ENCODE measurements at regions of chr9 and their contacts with region 1.

Region 1: DNA sequence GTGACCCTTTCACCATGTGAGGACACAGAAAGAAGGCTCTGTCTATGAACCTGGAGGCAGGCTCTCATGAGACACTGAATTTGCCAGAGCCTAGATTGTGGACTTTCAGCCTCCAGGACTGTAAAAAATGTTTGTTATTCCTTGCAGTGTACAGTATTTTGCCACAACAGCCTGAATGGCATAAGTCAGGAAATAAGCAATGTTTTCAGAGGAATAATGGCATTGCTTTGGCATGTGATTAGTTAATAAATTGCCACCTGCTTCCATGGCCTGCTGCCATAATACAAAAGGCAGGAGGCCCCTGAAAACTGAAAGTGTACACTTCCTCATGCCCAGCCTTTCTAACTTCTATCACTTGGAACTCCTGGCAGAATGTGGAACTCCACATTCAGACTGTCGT is 408.1 kb downstream of the GADD45G start:
- DNase-seq: peak in 1 of 3 donors; percentile 24
- H3K4me3 ChIP-seq: no peak overlapping the region
- H3K4me3 Mint-ChIP-seq: no peak overlapping the region
- H3K27ac ChIP-seq: no peak overlapping the region
- H3K27ac Mint-ChIP-seq: no peak overlapping the region
- H3K4me1 ChIP-seq: peaks cover 20 to 24% of the 10 kb centered on the region in 2 donors
- H3K4me1 Mint-ChIP-seq: peaks cover 25% of the 10 kb centered on the region
- H3K27me3 ChIP-seq: no peaks in the 10 kb centered on the region
- H3K27me3 Mint-ChIP-seq: no peaks in the 10 kb centered on the region
- CTCF ChIP-seq: no peak

Region 2: DNA sequence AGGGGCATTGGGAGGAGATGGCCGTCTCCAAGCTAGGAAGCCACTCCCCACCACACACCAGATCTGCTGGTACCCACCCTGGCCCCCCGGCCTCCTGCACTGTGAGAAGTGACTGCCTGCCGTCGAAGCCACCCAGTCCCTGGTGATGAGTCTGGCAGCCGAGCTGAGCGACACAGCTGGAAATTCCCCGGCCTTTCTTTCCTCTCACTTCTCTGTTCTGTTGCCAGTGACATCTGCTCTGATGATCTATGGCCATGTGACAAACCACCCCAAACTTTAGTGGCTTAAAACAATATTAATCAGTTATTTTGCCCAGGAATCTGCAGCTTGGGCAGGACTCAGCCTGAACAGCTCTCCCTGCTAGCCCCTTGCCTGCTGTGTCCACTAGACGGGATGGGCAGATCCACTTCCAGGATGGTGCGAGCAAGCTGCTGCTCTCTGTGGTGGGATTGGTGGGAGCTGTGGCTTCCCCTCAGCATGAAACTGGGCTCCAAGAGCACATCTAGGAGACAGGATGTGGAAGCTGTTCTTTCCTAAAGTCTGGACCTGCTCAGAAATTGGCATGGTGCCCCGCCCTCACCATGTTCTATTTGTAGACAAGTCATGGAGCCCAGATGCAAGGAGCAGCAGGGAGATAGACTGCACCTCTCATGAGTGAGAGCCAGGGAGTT is 196.9 kb before region 1 on chr9:
- intact Hi-C with region 1: no loop called
- DNase-seq: peak in 2 of 3 donors; percentile 8 to 65
- H3K4me3 ChIP-seq: no peak overlapping the region
- H3K4me3 Mint-ChIP-seq: no peak overlapping the region
- H3K27ac ChIP-seq: no peak overlapping the region
- H3K27ac Mint-ChIP-seq: peak overlapping the region in 2 of 7 donors; percentile 33 to 63
- H3K4me1 ChIP-seq: no peaks in the 10 kb centered on the region
- H3K4me1 Mint-ChIP-seq: peaks cover 14% of the 10 kb centered on the region
- H3K27me3 ChIP-seq: peaks cover 0 to 9% of the 10 kb centered on the region in 2 donors
- H3K27me3 Mint-ChIP-seq: peaks cover 8 to 21% (median 19%) of the 10 kb centered on the region in 3 donors
- CTCF ChIP-seq: no peak

Region 3: GRCh38 chr9:90064971-90065370 is 52.0 kb after region 1 on chr9:
- intact Hi-C with region 1: loop called in 1 of 2 experiments (anchors 10 kb)
- DNase-seq: no peak
- H3K4me3 ChIP-seq: no peak overlapping the region
- H3K4me3 Mint-ChIP-seq: no peak overlapping the region
- H3K27ac ChIP-seq: no peak overlapping the region
- H3K27ac Mint-ChIP-seq: no peak overlapping the region
- H3K4me1 ChIP-seq: no peaks in the 10 kb centered on the region
- H3K4me1 Mint-ChIP-seq: peaks cover 5% of the 10 kb centered on the region
- H3K27me3 ChIP-seq: no peaks in the 10 kb centered on the region
- H3K27me3 Mint-ChIP-seq: peaks cover 3 to 6% (median 3%) of the 10 kb centered on the region in 3 donors
- CTCF ChIP-seq: no peak